Cardiac septum (tissue), 1 donor: ENCODE measurements at regions of chr7 and their contacts with region 1.

Region 1: DNA sequence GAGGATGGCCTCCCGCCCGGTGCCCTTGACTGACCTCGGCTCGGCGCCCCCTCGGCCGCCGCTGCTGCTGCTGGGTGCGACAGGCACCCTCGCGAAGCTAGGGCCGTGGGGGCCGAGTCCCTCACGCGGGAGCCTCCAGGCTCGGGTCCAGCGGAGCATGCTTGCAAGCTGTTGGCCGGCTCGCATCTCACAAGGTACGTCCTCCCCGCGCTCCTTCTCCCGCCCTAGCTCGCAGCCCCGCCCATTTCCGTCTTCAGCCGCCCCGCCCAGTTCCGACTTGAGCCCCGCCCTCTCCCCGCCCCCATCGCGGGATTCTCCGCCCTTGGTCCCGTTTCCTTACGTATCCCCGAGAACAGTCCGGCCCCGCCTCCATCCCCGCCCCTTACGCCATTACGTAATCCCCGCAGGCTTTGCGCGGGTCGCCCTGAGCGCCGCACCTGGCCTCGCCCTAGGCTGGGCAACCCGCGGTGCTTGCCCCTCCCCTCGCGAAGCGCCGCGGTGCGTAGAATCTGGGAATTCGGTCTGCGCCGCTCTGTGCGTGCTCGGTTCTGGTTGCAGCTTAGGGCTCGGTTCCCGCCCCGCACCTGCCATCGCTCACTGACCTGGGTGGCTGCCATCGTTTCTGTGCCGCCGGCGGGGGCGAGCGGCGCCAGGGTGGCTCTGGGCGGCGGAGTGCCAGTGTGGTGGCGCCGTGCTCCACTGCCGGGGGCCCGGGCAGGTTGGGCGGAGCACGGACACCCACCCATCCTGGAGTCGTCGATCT is at the start of gene ABHD11:
- DNase-seq: peak; percentile 99
- total RNA-seq, gene ABHD11: 31.6 TPM

Region 2: DNA sequence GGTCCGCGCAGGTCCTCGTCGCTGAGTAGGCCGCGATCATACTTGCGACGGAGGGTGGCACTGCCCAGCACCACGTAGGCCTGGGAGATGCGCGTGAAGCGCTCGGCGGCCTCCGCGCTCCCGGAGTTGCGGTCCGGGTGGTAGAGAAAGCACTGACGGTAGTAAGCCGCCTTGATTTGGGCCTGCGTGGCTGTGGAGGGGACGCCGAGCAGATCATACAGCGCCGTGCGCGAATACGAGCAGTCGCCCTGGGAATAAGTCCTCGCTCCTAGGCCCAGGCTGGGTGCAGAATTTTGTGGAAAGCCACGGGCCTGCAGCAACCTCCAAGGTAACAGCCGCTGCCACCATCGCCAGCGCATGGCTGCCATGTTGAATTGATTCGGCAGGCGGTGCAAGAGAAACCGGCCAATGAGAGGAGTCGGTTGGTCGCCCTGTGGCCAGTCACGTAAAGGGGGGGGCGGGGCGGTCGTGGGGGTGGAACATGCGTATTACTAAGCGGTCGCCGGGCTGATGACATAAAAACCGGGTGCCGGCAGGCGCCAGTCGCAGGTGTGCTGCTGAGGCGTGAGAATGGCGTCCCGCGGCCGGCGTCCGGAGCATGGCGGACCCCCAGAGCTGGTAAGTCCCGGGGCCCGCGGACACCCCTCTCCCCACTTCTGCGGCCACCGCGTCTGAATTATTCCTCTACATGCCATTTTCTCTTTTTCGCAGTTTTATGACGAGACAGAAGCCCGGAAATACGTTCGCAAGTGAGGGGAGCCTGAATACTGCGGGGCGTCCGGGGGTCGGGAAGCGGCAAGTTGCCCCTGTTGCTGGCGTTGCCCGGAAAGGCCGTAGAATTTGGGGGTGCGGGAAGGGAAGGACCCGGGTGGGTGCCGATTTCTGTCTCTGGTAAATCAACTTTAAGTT is 55.5 kb before region 1 on chr7 and contains the starts of genes BUD23 and DNAJC30:
- intact Hi-C with region 1: loop called (anchors 5 kb)
- DNase-seq: peak; percentile 98
- total RNA-seq, gene BUD23: 59.1 TPM
- total RNA-seq, gene DNAJC30: 16.4 TPM

Region 3: DNA sequence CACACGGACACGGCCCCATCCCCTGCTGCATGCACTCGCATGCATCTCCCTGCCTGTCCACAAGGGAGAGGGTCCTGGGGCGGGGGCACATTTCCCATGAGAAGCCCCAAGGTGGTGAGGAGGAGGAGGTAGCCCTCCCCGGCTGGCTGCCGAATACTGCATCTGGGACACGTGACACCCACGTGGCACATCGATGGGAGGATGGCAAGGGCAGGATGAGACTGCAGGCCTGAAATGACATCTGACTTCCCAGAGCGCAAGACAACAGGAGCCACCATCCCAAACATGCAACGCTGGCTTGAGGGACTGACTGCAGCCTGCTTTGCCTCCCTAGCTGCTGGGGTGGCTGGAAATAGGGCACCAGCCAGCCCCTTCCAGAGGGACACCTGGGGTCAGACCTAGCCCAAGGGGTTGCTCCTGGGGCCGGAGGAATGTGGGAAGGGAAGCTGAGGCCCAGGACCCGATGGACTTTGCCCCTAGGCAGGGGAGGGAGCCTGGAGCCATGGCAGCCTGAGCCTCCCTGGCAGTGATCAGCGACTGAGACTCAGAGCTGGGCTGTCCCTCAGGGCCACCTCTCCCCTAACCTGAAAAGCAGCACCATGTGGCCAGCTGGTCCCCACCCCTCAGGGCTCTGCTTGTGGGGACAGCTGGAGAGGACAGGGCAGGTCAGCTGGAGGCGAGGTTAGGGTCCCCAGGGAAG is 39.3 kb before region 1 on chr7:
- intact Hi-C with region 1: no loop called
- DNase-seq: no peak

Region 4: DNA sequence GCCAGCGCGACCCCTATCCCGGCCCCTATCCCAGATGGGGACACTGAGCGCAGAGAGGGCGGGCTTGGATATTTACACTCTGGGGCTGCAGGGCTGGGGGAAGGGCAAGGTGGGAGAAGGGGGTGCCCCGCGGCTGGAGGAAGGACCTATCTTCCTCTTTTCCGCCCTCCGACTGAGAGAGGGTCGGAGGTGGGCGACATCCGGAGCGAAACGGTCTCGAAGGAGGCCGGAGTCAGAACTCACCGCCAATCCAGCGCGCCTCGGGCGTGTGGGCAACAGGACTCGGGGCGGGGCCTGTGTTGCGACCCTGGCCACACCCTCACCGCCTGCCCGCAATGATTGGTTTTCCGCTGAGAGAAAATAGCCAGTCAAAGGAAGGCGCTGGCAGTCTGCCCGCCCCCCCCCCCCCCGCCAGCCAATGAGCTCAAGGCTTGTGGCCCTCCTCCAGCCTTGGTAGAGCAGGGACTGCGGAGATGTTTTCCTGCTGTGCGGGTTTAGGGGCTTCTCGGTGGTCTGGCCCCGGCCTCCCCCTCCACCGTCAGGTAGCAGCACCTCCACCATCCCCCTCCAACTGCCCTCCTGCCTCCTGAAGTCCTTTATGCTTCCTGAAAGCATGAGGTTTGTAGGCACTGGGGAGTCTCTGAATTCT is 103.6 kb after region 1 on chr7 and contains the start of gene METTL27:
- intact Hi-C with region 1: loop called (anchors 10 kb)
- DNase-seq: peak; percentile 94
- total RNA-seq, gene METTL27: 0.35 TPM